ENCODE measurements at regions of chr10 and their contacts with region 1.

Region 1: DNA sequence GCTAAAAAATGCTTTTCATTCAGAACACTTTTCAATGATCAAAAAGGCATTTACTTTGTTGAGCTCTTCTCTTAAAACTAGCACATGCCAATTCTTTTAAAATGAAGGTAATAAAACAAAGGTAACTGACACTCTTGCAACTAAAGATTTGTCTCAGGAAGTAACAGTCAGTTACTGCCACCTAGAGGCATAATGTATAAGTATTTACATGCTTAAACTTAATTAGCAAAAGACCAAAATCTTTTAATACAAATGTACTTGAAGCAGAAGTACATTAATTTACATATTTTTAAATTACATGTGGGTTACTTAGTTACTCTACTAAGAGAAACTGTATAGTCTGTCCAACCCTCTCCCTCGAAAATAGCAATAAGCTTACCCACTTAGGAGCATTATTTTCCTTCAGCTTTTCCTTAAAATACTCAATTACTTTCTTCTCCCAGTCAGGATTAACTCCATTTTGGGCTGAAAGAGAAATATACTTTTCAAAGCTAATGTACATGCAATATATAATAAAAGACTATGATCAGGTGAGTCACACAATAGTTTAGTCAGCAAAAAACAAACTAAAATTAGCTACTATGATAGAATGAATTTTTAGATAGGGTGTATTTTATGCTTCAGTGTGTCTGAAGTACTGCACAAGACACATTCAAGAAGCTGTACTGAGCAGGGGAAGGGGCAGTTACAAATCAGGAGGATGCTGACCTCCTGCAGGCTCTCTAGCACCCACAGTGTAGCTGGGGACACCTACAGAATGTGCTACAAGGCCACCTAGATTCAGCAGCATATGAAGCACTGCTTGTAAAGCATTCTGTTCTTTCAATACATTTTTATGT is 13.0 kb downstream of the MCMBP start:
- DNase-seq: peak in 2 of 9 experiments; percentile 59 to 72
- ATAC-seq: peak; percentile 78
- H3K4me3 ChIP-seq: no peak overlapping the region
- H3K4me3 Mint-ChIP-seq: no peak overlapping the region
- H3K27ac ChIP-seq: peak overlapping the region in 1 of 2 experiments; percentile 23
- H3K27ac Mint-ChIP-seq: peak overlapping the region; percentile 30
- H3K4me1 ChIP-seq: peaks cover 10% of the 10 kb centered on the region
- H3K4me1 Mint-ChIP-seq: peaks cover 32% of the 10 kb centered on the region
- H3K27me3 ChIP-seq: no peaks in the 10 kb centered on the region
- H3K27me3 Mint-ChIP-seq: no peaks in the 10 kb centered on the region
- CTCF ChIP-seq: peak; percentile 79

Region 2: DNA sequence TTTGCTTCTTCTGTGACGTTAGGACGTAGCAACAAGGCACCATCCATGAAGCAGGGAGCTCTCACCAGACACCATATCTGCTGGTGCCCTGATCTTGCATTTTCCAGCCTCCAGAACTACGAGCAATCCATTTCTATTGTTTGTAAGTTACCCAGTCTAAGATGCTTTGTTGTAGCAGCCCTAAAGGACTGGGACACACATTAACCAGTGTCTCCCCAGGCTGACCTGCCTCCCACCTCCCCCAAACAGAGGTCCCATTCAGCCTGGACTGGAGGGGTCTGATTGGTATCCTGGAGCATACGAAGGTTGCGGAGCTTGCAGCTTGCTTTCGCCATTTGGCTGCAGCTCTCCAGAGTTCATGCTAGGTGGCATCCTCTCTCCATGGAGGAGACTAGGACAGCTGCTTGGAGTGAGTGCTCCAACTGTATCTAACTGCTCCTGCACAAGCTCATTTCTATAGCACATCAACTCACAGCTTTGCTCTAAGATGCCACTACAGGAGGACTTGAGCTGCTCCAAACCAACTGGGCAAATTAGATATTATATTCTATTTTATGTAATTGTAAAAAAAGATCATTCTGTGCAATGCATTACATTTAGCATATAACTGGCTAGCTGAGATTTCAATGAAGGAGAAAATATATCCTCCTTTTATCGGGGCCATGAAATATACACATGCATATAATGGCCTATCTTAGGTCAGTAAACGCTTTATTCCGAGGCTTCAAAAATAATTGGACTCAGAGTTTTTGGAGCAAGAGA is 660.2 kb before region 1 on chr10:
- CTCF ChIA-PET with region 1: no interaction called
- POLR2A ChIA-PET with region 1: no interaction called
- intact Hi-C with region 1: loop called in 1 of 2 experiments (anchors 5 kb)
- DNase-seq: peak in 8 of 9 experiments; percentile 15 to 72 (median 46)
- ATAC-seq: peak; percentile 82
- H3K4me3 ChIP-seq: no peak overlapping the region
- H3K4me3 Mint-ChIP-seq: no peak overlapping the region
- H3K27ac ChIP-seq: no peak overlapping the region
- H3K27ac Mint-ChIP-seq: no peak overlapping the region
- H3K4me1 ChIP-seq: no peaks in the 10 kb centered on the region
- H3K4me1 Mint-ChIP-seq: peaks cover 7% of the 10 kb centered on the region
- H3K27me3 ChIP-seq: no peaks in the 10 kb centered on the region
- H3K27me3 Mint-ChIP-seq: no peaks in the 10 kb centered on the region
- CTCF ChIP-seq: peak; percentile 44

Region 3: GRCh38 chr10:119680621-119681081 is 179.0 kb before region 1 on chr10:
- CTCF ChIA-PET with region 1: interaction called, 37 read pairs
- POLR2A ChIA-PET with region 1: no interaction called
- intact Hi-C with region 1: no loop called
- DNase-seq: no peak
- ATAC-seq: no peak
- H3K4me3 ChIP-seq: no peak overlapping the region
- H3K4me3 Mint-ChIP-seq: no peak overlapping the region
- H3K27ac ChIP-seq: no peak overlapping the region
- H3K27ac Mint-ChIP-seq: no peak overlapping the region
- H3K4me1 ChIP-seq: no peaks in the 10 kb centered on the region
- H3K4me1 Mint-ChIP-seq: peaks cover 6% of the 10 kb centered on the region
- H3K27me3 ChIP-seq: no peaks in the 10 kb centered on the region
- H3K27me3 Mint-ChIP-seq: peaks cover 4% of the 10 kb centered on the region
- CTCF ChIP-seq: no peak

Region 4: GRCh38 chr10:119750391-119751230 is 109.0 kb before region 1 on chr10:
- CTCF ChIA-PET with region 1: interaction called, 60 read pairs
- POLR2A ChIA-PET with region 1: interaction called, 3 read pairs
- intact Hi-C with region 1: loop called (anchors 1 to 5 kb)
- DNase-seq: peak; percentile 6 to 74 (median 53)
- ATAC-seq: peak; percentile 95
- H3K4me3 ChIP-seq: no peak overlapping the region
- H3K4me3 Mint-ChIP-seq: no peak overlapping the region
- H3K27ac ChIP-seq: no peak overlapping the region
- H3K27ac Mint-ChIP-seq: no peak overlapping the region
- H3K4me1 ChIP-seq: no peaks in the 10 kb centered on the region
- H3K4me1 Mint-ChIP-seq: peaks cover 4% of the 10 kb centered on the region
- H3K27me3 ChIP-seq: no peaks in the 10 kb centered on the region
- H3K27me3 Mint-ChIP-seq: no peaks in the 10 kb centered on the region
- CTCF ChIP-seq: peak; percentile 77

Region 5: GRCh38 chr10:119892188-119893065 is 32.8 kb after region 1 on chr10 and contains the start of gene SEC23IP:
- CTCF ChIA-PET with region 1: interaction called, 11 read pairs
- POLR2A ChIA-PET with region 1: no interaction called
- intact Hi-C with region 1: no loop called
- DNase-seq: peak; percentile 78 to 95 (median 89)
- ATAC-seq: peak; percentile 98
- H3K4me3 ChIP-seq: peak within 1 kb of the TSS; percentile 97 to 98
- H3K4me3 Mint-ChIP-seq: peak within 1 kb of the TSS; percentile 98
- H3K27ac ChIP-seq: peak within 1 kb of the TSS; percentile 84 to 96
- H3K27ac Mint-ChIP-seq: peak within 1 kb of the TSS; percentile 99
- H3K4me1 ChIP-seq: peaks cover 10% of the 10 kb centered on the region
- H3K4me1 Mint-ChIP-seq: peaks cover 46% of the 10 kb centered on the region
- H3K27me3 ChIP-seq: no peaks in the 10 kb centered on the region
- H3K27me3 Mint-ChIP-seq: no peaks in the 10 kb centered on the region
- CTCF ChIP-seq: no peak
- total RNA-seq, gene SEC23IP: 16.2 to 19.8 TPM

Region 6: GRCh38 chr10:120005207-120006201 is 145.9 kb after region 1 on chr10:
- CTCF ChIA-PET with region 1: no interaction called
- POLR2A ChIA-PET with region 1: no interaction called
- intact Hi-C with region 1: no loop called
- DNase-seq: no peak
- ATAC-seq: no peak
- H3K4me3 ChIP-seq: no peak overlapping the region
- H3K4me3 Mint-ChIP-seq: no peak overlapping the region
- H3K27ac ChIP-seq: no peak overlapping the region
- H3K27ac Mint-ChIP-seq: no peak overlapping the region
- H3K4me1 ChIP-seq: no peaks in the 10 kb centered on the region
- H3K4me1 Mint-ChIP-seq: no peaks in the 10 kb centered on the region
- H3K27me3 ChIP-seq: peaks cover 0 to 6% of the 10 kb centered on the region in 2 experiments
- H3K27me3 Mint-ChIP-seq: peaks cover 44% of the 10 kb centered on the region
- CTCF ChIP-seq: no peak